Lower lobe of right lung (tissue), 2 donors: ENCODE measurements at regions of chr7 and their contacts with region 1.

Region 1: GRCh38 chr7:123682690-123683089 is 27.0 kb downstream of the LMOD2 start:
- DNase-seq: no peak
- ATAC-seq: peak; percentile 53 to 76
- H3K4me3 ChIP-seq: no peak overlapping the region
- H3K27ac ChIP-seq: no peak overlapping the region
- H3K4me1 ChIP-seq: peaks cover 9% of the 10 kb centered on the region
- H3K27me3 ChIP-seq: no peaks in the 10 kb centered on the region
- CTCF ChIP-seq: peak; percentile 57

Region 2: GRCh38 chr7:123865517-123866117 is 182.9 kb after region 1 on chr7:
- intact Hi-C with region 1: loop called (anchors 10 kb)
- DNase-seq: no peak
- ATAC-seq: peak; percentile 90 to 93
- H3K4me3 ChIP-seq: no peak overlapping the region
- H3K27ac ChIP-seq: no peak overlapping the region
- H3K4me1 ChIP-seq: peaks cover 6% of the 10 kb centered on the region
- H3K27me3 ChIP-seq: no peaks in the 10 kb centered on the region
- CTCF ChIP-seq: peak; percentile 65

Region 3: GRCh38 chr7:123948136-123948535 is 265.4 kb after region 1 on chr7:
- intact Hi-C with region 1: no loop called
- DNase-seq: no peak
- ATAC-seq: no peak
- H3K4me3 ChIP-seq: no peak overlapping the region
- H3K27ac ChIP-seq: no peak overlapping the region
- H3K4me1 ChIP-seq: no peaks in the 10 kb centered on the region
- H3K27me3 ChIP-seq: no peaks in the 10 kb centered on the region
- CTCF ChIP-seq: no peak